Cardiac septum (tissue), 1 donor: ENCODE measurements at regions of chr1 and their contacts with region 1.

Region 1: DNA sequence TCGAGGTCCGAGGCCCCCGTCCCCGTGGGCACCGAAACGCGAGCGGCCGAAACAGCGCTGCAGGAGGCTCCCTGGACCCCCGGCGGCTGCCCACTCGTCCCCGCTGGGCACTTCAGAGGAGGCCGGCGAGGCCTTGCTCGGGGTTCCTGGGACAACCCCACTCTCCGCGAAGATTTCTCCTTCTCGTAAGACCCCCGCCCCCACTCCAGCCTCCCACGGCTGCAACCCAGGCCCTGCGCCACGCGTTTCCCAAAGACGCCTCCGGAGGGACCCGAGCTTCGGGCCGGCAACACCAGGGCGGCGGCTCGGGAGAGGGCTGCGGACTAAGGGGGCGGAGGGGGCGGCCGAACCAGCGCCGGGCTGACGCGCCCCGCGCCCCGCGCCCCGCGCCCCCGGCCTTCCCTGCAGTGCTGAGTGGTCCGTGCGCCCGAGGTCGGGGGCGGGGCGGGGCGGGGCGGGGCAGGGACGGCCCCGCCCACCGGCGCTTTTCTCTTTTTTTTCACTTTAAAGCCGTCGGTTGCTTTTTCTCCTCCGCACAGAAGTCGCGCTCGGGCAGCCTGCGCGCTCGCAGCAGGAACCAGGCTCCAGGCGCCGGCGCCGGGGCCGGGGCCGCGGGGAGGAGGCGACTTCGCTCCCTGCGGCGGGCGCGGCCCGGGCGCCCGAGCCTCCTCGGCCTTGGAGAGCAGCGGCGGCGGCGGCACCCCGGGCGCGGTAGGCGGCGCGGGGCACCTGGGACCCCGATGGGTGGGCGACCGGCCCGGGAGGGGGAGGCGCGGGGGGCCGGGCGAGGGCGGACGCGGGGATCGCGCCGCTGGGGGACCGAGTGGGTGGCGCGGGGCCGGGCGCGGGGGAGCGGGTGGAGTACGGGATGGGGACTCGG is at the start of gene SPSB1:
- DNase-seq: peak; percentile 88
- total RNA-seq, gene SPSB1: 12.9 TPM

Region 2: DNA sequence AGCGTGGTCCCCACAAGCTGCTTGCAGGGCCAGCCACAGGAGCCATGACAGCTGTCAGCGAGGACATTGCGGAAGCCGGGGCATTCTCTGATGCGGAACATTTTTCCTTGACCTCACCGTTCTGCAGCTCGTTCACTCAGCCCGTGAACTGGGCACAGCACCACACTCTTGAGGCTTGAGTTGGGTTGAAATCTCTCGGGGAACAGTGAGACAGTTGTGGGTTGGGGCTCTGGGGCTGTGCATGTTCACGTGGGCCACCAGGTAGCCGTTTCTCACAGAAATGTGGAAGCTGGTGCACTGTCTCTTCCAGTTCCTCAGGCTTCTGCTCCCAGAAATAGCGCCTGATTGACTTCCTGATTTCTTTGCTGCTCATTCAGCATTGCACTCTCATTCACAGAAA is 69.9 kb after region 1 on chr1:
- intact Hi-C with region 1: no loop called
- DNase-seq: no peak

Region 3: GRCh38 chr1:9438431-9439073 is 146.0 kb after region 1 on chr1:
- intact Hi-C with region 1: loop called (anchors 5 kb)
- DNase-seq: no peak